Activated CD4-positive, alpha-beta T cell treated with anti-CD3 and anti-CD28 coated beads for 36 hours (primary cell): ENCODE measurements at regions of chr1 and their contacts with region 1.

Region 1: DNA sequence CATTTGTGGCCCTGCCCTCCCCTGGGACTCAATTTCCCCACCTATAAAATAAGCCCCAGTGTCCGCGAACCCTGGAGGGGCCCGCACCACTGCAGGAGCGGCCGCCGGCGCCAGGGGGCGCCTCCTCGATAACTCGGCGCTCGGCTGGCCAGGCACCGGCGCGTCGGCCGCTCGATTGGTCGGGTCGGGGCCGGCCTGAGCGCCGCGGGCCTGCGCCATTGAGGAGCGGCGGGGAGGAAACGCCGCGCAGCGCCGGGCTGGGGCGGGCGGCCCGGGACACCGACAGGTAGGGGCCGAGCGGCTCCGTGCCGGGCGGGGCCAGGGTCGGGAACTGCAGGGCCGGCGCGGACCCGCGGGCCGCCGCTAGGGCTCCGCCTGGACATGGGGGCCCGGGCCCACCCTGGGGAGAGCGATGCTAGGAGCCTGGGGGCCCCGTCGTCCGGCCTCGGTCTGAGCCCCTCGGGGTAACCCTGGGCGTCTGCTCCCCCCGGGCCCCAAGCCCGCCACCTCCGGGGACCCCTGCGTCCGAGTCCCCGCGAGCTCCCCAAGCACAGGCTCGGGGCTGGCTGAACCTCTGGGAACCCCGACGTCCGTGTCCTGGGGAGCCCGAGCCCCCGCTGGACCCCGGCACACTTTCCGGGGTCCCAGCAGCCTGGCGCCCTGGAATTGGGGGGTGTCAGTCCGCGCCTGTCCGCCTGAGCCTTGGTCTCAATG is at the start of gene VPS13D:
- DNase-seq: peak; percentile 93
- ATAC-seq: peak; percentile 92
- H3K4me3 Mint-ChIP-seq: peak within 1 kb of the TSS; percentile 83
- H3K27ac Mint-ChIP-seq: peak within 1 kb of the TSS; percentile 47
- H3K4me1 Mint-ChIP-seq: peaks cover 23% of the 10 kb centered on the region
- H3K27me3 Mint-ChIP-seq: no peaks in the 10 kb centered on the region
- total RNA-seq, gene VPS13D: 20.6 to 22.9 TPM

Region 2: DNA sequence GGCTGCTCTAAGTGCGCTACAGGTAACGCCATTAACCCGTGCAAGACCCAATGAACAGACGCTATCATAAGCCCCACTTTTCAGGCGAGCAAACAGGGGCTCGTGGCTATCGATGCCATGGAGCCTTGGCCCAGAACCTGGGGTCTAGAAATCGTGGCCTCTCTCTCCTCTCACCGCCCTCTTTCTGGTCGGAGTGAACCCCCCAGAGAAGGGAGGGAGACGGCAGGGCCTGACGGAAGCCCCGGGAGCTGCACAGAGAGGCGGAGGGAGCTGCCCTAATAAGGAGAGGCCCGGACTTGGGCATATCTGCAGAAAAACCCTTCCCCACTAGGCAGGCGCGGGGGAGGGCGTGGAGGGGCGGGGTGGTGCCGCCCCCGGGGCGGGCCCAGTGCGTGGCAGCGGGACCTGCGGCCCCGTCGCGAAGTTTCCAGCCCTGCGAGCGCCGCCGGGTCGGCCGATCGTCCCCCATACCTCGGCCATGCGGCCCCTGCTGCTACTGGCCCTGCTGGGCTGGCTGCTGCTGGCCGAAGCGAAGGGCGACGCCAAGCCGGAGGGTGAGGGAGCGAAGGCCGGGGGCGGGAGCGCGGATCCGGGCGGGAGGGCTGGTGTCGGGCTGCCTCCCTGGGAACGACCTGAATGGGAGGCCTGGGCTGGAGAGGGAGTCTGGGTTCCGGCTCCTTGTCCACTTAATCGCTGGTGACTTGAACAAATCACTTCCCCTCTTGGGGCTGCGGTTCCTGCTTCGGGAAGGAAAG is 295.5 kb before region 1 on chr1 and contains the start of gene PLOD1:
- CTCF ChIA-PET with region 1: no interaction called
- POLR2A ChIA-PET with region 1: no interaction called
- intact Hi-C with region 1: loop called in 1 of 2 experiments (anchors 5 kb)
- DNase-seq: peak; percentile 88
- ATAC-seq: peak; percentile 98
- H3K4me3 Mint-ChIP-seq: peak within 1 kb of the TSS; percentile 75
- H3K27ac Mint-ChIP-seq: no peak within 1 kb of the TSS
- H3K4me1 Mint-ChIP-seq: peaks cover 4% of the 10 kb centered on the region
- H3K27me3 Mint-ChIP-seq: no peaks in the 10 kb centered on the region
- total RNA-seq, gene PLOD1: 11.7 to 11.9 TPM

Region 3: GRCh38 chr1:12113433-12114339 is 116.3 kb before region 1 on chr1:
- CTCF ChIA-PET with region 1: no interaction called
- POLR2A ChIA-PET with region 1: no interaction called
- intact Hi-C with region 1: loop called in 1 of 2 experiments (anchors 1 kb)
- DNase-seq: no peak
- ATAC-seq: peak; percentile 28
- H3K4me3 Mint-ChIP-seq: no peak overlapping the region
- H3K27ac Mint-ChIP-seq: no peak overlapping the region
- H3K4me1 Mint-ChIP-seq: peaks cover 5% of the 10 kb centered on the region
- H3K27me3 Mint-ChIP-seq: no peaks in the 10 kb centered on the region

Region 4: GRCh38 chr1:12208764-12209494 is 21.1 kb before region 1 on chr1:
- CTCF ChIA-PET with region 1: interaction called, 10 read pairs
- POLR2A ChIA-PET with region 1: no interaction called
- intact Hi-C with region 1: no loop called
- DNase-seq: peak; percentile 93
- ATAC-seq: peak; percentile 68
- H3K4me3 Mint-ChIP-seq: no peak overlapping the region
- H3K27ac Mint-ChIP-seq: peak overlapping the region; percentile 17
- H3K4me1 Mint-ChIP-seq: peaks cover 47% of the 10 kb centered on the region
- H3K27me3 Mint-ChIP-seq: no peaks in the 10 kb centered on the region

Region 5: GRCh38 chr1:12764016-12764415 is 534.0 kb after region 1 on chr1:
- CTCF ChIA-PET with region 1: no interaction called
- POLR2A ChIA-PET with region 1: no interaction called
- intact Hi-C with region 1: no loop called
- DNase-seq: no peak
- ATAC-seq: no peak
- H3K4me3 Mint-ChIP-seq: no peak overlapping the region
- H3K27ac Mint-ChIP-seq: no peak overlapping the region
- H3K4me1 Mint-ChIP-seq: no peaks in the 10 kb centered on the region
- H3K27me3 Mint-ChIP-seq: peaks cover 12% of the 10 kb centered on the region